ENCODE measurements at regions of chr1 and their contacts with region 1.

Region 1: GRCh38 chr1:240027059-240027462 is 64.6 kb upstream of the FMN2 start:
- DNase-seq: peak in 2 of 3 donors; percentile 41 to 59
- ATAC-seq: peak; percentile 52 to 61
- H3K4me3 ChIP-seq: no peak overlapping the region
- H3K27ac ChIP-seq: no peak overlapping the region
- H3K4me1 ChIP-seq: no peaks in the 10 kb centered on the region
- H3K27me3 ChIP-seq: no peaks in the 10 kb centered on the region

Region 2: DNA sequence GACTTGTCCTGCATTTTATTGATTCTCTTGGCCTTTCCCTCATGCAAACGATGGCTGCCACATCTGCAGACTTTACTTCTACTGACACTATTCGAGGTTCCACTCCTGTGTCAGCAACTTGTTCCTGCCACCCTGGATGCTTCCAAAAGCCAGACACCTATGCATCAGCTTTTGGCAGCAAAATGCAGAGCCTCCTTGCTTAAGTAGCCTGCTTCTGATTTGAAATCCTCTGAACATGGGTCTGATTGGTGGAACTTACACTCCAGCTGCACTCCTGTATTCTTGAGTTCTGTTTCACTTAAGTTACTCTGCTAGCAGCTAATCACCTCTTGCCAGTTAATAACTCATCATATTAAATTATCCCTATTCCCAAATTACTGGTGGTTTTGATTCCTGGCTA is 87.5 kb before region 1 on chr1:
- intact Hi-C with region 1: no loop called
- DNase-seq: no peak
- ATAC-seq: no peak
- H3K4me3 ChIP-seq: no peak overlapping the region
- H3K27ac ChIP-seq: no peak overlapping the region
- H3K4me1 ChIP-seq: no peaks in the 10 kb centered on the region
- H3K27me3 ChIP-seq: no peaks in the 10 kb centered on the region

Region 3: GRCh38 chr1:240149484-240150094 is 122.5 kb after region 1 on chr1:
- intact Hi-C with region 1: loop called in 2 of 4 experiments (anchors 10 kb)
- DNase-seq: no peak
- ATAC-seq: no peak
- H3K4me3 ChIP-seq: no peak overlapping the region
- H3K27ac ChIP-seq: no peak overlapping the region
- H3K4me1 ChIP-seq: no peaks in the 10 kb centered on the region
- H3K27me3 ChIP-seq: no peaks in the 10 kb centered on the region

Measured in right cardiac atrium (tissue), 5 donors.